Endothelial cell of umbilical vein (primary cell): ENCODE measurements at regions of chr10 and their contacts with region 1.

Region 1: DNA sequence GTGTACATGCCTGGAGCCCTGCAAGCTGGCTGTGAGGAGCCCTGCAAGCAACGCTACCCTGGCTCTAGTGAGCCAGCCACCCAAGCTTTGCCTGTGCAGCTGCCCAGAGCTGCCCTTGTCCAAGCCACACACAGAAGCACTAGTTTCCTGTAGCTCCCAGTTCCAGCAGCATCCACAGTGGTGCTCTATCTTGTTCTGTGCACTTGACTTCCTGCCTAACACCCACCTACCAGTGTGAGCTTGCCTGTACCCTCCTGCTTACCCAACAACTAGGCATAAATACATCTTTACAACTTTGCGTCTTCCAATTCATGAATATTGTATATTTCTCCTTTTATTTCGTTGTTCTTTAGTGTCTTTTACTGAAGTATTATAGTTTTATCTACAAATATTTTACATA is 32.2 kb upstream of the ZNF518A start:
- DNase-seq: no peak
- H3K4me3 ChIP-seq: no peak overlapping the region
- H3K27ac ChIP-seq: no peak overlapping the region
- H3K4me1 ChIP-seq: no peaks in the 10 kb centered on the region
- H3K27me3 ChIP-seq: peaks cover 36 to 41% of the 10 kb centered on the region in 2 experiments
- CTCF ChIP-seq: no peak
- POLR2A ChIP-seq: no peak

Region 2: DNA sequence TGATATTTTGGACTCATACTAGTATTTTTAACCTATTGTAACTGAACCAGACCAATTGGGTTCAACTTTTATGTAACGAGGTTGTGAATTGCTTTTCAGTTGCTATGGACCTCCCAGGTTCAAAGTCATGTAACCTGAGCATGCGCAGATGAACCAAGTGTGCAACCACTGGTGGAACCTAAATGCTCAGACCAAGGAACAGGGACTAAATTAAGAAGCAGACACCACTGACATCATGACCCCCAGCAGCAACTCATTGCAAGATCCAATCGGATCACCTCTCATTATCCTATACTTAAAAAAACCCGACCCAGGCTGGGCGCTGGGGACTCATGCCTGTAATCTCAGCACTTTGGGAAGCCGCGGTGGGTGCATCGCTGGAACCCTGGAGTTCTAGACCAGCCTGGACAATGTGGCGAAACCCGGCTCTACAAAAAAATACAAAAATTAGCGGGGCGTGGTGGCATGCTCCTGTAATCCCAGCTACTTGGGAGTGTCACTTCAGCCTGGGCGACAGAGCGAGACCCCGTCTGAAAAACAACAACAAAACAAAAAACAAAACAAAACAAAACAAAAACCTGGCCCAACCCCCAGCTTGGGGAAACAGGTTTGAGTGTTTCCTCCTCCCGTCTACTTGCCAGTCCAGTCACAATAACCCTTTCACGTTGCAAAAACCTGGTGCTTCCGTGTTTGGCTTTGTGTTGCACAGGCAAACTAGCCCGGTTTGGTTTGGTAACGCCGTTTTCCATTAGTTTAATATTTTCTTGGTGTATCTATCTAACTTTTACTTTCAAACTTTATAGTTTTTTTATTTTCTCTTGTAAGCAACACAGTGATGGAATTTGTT is 21.0 kb after region 1 on chr10:
- CTCF ChIA-PET with region 1: interaction called, 3 read pairs
- POLR2A ChIA-PET with region 1: no interaction called
- dilution Hi-C with region 1: no loop called
- intact Hi-C with region 1: loop called (anchors 2 kb)
- DNase-seq: no peak
- H3K4me3 ChIP-seq: no peak overlapping the region
- H3K27ac ChIP-seq: no peak overlapping the region
- H3K4me1 ChIP-seq: peaks cover 6% of the 10 kb centered on the region
- H3K27me3 ChIP-seq: peaks cover 4 to 17% of the 10 kb centered on the region in 2 experiments
- CTCF ChIP-seq: no peak
- POLR2A ChIP-seq: no peak